H1 (cell line): ENCODE measurements at regions of chr3 and their contacts with region 1.

Region 1: DNA sequence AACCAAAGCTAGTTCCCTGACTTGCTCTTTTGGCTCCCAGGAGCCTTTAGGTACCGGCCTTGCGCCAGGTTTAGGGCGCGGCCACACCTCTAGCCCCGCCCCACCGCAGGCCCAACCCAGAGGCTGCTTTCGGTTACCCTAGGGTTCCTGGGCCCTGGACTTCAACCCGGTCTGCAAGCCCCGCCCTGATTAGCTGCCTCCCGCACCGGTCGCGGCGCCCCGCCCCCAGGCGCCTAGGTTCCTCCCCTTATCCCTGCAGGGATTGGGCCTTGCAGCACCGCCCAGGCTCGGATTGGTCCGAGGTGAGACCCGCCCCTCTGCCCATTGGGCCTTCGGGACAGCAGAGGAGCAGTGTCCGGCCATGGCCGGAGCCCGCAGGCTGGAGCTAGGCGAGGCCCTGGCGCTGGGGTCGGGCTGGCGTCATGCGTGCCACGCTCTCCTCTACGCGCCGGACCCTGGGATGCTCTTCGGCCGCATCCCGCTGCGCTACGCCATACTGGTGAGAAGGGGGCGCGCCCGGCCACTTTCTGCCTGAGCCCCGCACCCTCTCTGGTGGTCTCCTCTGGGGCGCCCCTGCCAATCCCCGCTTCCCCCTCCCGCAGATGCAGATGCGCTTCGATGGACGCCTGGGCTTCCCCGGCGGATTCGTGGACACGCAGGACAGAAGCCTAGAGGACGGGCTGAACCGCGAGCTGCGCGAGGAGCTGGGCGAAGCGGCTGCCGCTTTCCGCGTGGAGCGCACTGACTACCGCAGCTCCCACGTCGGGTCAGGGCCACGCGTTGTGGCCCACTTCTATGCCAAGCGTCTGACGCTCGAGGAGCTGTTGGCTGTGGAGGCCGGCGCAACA is at the start of gene NUDT16:
- DNase-seq: peak; percentile 98 to 99
- H3K4me3 ChIP-seq: peak within 1 kb of the TSS; percentile 75 to 88 (median 80)
- H3K27ac ChIP-seq: peak within 1 kb of the TSS; percentile 74
- H3K4me1 ChIP-seq: peaks cover 0 to 7% (median 0%) of the 10 kb centered on the region in 4 experiments; a peak in 4 of 7 replicates
- H3K27me3 ChIP-seq: no peaks in the 10 kb centered on the region
- CTCF ChIP-seq: peak in 1 of 3 experiments; percentile 8; a peak in 1 of 4 replicates
- EP300 ChIP-seq: peak in 1 of 2 experiments; percentile 19; a peak in 1 of 3 replicates
- POLR2A ChIP-seq: peak; percentile 79 to 94
- RAD21 ChIP-seq: no peak; a peak in 1 of 4 replicates
- total RNA-seq, gene NUDT16: 18.3 and 19.1 TPM in 2 replicates

Region 2: DNA sequence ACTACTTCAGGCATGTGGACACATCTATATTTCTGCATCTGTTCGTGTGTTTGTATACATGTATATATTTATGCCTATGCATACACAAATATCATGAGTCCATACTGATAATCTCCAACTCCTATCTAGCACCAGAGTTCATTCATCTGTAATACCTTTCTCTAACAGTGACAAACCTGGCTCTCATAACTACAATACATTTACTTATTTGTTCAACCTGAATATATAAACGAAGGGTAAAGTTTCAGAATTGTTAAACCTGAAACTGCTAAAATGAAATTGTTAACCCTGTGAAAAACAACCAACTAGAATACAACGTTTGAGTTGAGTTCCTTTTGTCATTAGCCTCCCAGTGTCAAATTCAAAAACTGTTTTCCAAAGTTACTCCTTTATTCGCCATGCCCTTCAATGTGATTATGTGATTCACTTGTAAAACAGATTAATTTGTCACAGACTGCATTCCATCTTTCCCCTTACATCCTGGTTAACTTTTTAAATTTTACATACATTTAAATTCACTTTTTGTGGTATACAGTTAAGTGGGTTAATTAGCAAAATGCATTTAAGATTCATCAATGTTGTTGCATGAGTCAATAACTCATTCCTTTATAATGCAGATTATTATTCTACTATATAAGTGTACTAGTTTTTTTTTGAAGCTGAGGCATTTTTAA is 693.5 kb before region 1 on chr3:
- CTCF ChIA-PET with region 1: no interaction called
- POLR2A ChIA-PET with region 1: no interaction called
- DNase-seq: no peak
- H3K4me3 ChIP-seq: no peak overlapping the region
- H3K27ac ChIP-seq: no peak overlapping the region
- H3K4me1 ChIP-seq: no peaks in the 10 kb centered on the region
- H3K27me3 ChIP-seq: no peaks in the 10 kb centered on the region
- CTCF ChIP-seq: no peak
- EP300 ChIP-seq: no peak
- POLR2A ChIP-seq: no peak
- RAD21 ChIP-seq: no peak

Region 3: DNA sequence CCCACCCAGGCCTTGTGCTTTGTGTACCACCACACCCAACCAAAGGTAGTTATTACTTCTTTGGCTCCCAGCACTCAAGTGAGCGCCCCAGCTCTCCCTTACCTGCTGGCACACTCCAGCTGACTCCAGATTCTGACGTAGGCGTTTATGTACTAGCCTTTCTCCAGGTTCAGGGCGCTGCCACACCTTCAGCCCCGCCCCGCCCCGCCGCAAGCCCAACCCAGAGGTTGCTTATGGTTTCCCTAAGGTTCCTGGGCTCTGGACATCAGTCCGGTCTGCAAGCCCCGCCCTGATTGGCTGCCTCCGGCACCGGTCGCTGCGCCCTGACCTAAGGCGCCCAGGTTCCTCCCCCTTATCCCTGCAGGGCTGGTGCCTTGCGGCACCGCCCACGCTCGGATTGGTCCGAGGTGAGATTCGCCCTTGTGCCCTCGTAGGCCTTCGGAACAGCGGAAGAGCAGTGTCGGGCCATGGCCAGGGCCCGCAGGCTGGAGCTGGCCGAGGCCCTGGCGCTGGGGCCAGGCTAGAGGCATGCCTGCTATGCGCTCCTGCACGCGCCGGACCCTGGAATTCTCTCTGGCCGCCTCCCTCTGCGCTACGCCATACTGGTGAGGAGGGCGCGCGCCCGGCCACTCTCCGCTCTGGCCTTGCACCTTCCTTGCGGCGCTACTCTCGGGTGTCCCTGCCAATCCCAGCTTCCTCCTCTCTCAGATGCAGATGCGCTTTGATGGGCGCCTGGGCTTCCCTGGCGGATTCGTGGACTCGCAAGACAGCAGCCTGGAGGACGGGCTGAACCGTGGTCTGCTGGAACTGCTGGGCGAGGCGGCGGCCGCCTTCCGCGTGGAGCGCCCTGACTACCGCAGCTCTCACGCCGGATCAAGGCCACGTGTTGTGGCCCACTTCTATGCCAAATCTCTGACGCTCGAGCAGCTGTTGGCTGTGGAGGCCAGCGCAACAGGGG is 19.9 kb before region 1 on chr3:
- CTCF ChIA-PET with region 1: interaction called, 4 read pairs
- POLR2A ChIA-PET with region 1: interaction called, 41 read pairs
- DNase-seq: peak; percentile 95
- H3K4me3 ChIP-seq: peak overlapping the region; percentile 61 to 75 (median 70)
- H3K27ac ChIP-seq: peak overlapping the region; percentile 89
- H3K4me1 ChIP-seq: peaks cover 2 to 8% (median 5%) of the 10 kb centered on the region in 4 experiments; a peak in 4 of 7 replicates
- H3K27me3 ChIP-seq: no peaks in the 10 kb centered on the region; a peak in 1 of 7 replicates
- CTCF ChIP-seq: no peak
- EP300 ChIP-seq: no peak; a peak in 1 of 3 replicates
- POLR2A ChIP-seq: peak; percentile 62 to 90
- RAD21 ChIP-seq: no peak; a peak in 1 of 4 replicates